BJ (cell line): ENCODE measurements at regions of chr12 and their contacts with region 1.

Region 1: GRCh38 chr12:48771588-48772112 is 17.2 kb downstream of the ADCY6 start:
- DNase-seq: no peak
- H3K4me3 ChIP-seq: no peak overlapping the region
- H3K27me3 ChIP-seq: no peaks in the 10 kb centered on the region
- CTCF ChIP-seq: no peak

Region 2: DNA sequence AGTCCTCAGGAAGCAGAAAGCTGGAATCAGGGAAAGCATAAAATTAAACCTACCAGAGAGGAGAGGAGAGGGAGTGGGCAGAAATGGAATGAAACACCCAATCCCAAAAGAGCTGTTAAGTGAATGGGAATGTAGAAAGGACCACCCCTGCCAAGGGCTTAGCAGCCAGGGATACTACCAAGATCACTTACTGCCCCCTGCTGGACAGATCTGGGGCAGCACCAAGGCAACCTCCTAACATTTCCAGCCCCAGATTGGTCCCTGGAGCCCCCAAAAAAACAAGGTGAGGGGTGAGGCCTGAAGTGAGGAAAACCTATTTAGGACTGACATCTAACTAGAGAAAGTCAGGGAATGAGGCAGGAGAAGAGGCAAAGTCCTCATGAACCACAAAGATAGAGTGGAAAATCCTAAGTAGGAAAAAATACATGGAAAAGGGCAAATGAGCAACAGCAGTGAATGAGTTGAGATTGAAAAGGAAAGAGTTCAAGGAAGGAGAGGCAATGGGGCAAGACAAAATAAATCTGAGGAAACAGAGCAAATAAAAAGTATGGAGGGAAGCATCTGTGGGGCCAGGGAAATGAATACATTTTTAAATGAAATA is 164.8 kb after region 1 on chr12:
- CTCF ChIA-PET with region 1: no interaction called
- POLR2A ChIA-PET with region 1: interaction called, 12 read pairs
- DNase-seq: no peak
- H3K4me3 ChIP-seq: no peak overlapping the region
- H3K27me3 ChIP-seq: no peaks in the 10 kb centered on the region
- CTCF ChIP-seq: peak; percentile 95